ENCODE measurements at regions of chr20 and their contacts with region 1.

Region 1: GRCh38 chr20:36645998-36646397 is at the start of gene SLA2:
- DNase-seq: peak; percentile 65 to 85 (median 71)
- H3K4me3 ChIP-seq: peak within 1 kb of the TSS; percentile 75 to 83
- H3K4me3 Mint-ChIP-seq: peak within 1 kb of the TSS; percentile 92 to 99 (median 98)
- H3K27ac ChIP-seq: peak within 1 kb of the TSS; percentile 77
- H3K27ac Mint-ChIP-seq: peak within 1 kb of the TSS; percentile 97 to 99 (median 98)
- H3K4me1 ChIP-seq: peaks cover 47% of the 10 kb centered on the region
- H3K4me1 Mint-ChIP-seq: peaks cover 28 to 67% (median 49%) of the 10 kb centered on the region in 4 donors
- H3K27me3 ChIP-seq: no peaks in the 10 kb centered on the region
- H3K27me3 Mint-ChIP-seq: no peaks in the 10 kb centered on the region
- total RNA-seq, gene SLA2: 28.7 to 29.9 TPM

Region 2: GRCh38 chr20:36573103-36573794 is 72.7 kb before region 1 on chr20 and contains the start of gene TGIF2:
- CTCF ChIA-PET with region 1: no interaction called
- POLR2A ChIA-PET with region 1: interaction called, 10 read pairs
- intact Hi-C with region 1: no loop called
- DNase-seq: peak; percentile 87 to 92 (median 89)
- H3K4me3 ChIP-seq: peak within 1 kb of the TSS; percentile 47 to 73
- H3K4me3 Mint-ChIP-seq: peak within 1 kb of the TSS; percentile 89 to 96 (median 92)
- H3K27ac ChIP-seq: peak within 1 kb of the TSS; percentile 100
- H3K27ac Mint-ChIP-seq: peak within 1 kb of the TSS; percentile 95 to 99 (median 99)
- H3K4me1 ChIP-seq: peaks cover 35% of the 10 kb centered on the region
- H3K4me1 Mint-ChIP-seq: peaks cover 24 to 46% (median 30%) of the 10 kb centered on the region in 4 donors
- H3K27me3 ChIP-seq: no peaks in the 10 kb centered on the region
- H3K27me3 Mint-ChIP-seq: no peaks in the 10 kb centered on the region
- total RNA-seq, gene TGIF2: 31.7 to 35.0 TPM

Region 3: DNA sequence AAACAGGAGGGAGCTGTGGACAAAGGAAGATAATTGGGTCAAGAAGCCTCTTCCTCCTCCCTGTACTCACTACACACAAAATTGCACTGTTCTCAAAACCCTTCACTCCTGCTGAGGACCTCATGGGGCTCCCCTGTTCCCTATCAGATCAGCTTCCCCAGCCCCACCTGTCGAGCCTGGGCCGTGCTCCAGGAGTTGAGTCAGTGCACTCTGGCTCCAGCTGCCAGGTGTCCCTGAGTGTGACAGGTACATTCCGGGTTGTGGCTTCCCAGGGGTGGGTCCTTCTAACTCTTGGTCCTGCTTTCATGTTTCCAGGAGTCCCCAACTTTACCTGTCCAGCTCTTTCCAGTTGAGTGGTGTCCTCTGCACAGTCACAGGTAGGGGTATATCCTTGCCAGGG is 32.0 kb before region 1 on chr20:
- CTCF ChIA-PET with region 1: interaction called, 83 read pairs
- POLR2A ChIA-PET with region 1: interaction called, 131 read pairs
- intact Hi-C with region 1: loop called (anchors 1 kb)
- DNase-seq: no peak
- H3K4me3 ChIP-seq: no peak overlapping the region
- H3K4me3 Mint-ChIP-seq: no peak overlapping the region
- H3K27ac ChIP-seq: no peak overlapping the region
- H3K27ac Mint-ChIP-seq: peak overlapping the region in 6 of 7 donors; percentile 43 to 74 (median 58)
- H3K4me1 ChIP-seq: peaks cover 15% of the 10 kb centered on the region
- H3K4me1 Mint-ChIP-seq: peaks cover 8 to 15% (median 10%) of the 10 kb centered on the region in 4 donors
- H3K27me3 ChIP-seq: no peaks in the 10 kb centered on the region
- H3K27me3 Mint-ChIP-seq: no peaks in the 10 kb centered on the region

Region 4: GRCh38 chr20:36658300-36658699 is 12.3 kb after region 1 on chr20:
- CTCF ChIA-PET with region 1: interaction called, 15 read pairs
- POLR2A ChIA-PET with region 1: interaction called, 7 read pairs
- intact Hi-C with region 1: no loop called
- DNase-seq: peak in 4 of 5 donors; percentile 33 to 46 (median 42)
- H3K4me3 ChIP-seq: peak overlapping the region; percentile 0 to 42
- H3K4me3 Mint-ChIP-seq: peak overlapping the region; percentile 65 to 81 (median 75)
- H3K27ac ChIP-seq: no peak overlapping the region
- H3K27ac Mint-ChIP-seq: peak overlapping the region; percentile 25 to 81 (median 71)
- H3K4me1 ChIP-seq: peaks cover 19% of the 10 kb centered on the region
- H3K4me1 Mint-ChIP-seq: peaks cover 11 to 27% (median 20%) of the 10 kb centered on the region in 4 donors
- H3K27me3 ChIP-seq: no peaks in the 10 kb centered on the region
- H3K27me3 Mint-ChIP-seq: no peaks in the 10 kb centered on the region

Region 5: DNA sequence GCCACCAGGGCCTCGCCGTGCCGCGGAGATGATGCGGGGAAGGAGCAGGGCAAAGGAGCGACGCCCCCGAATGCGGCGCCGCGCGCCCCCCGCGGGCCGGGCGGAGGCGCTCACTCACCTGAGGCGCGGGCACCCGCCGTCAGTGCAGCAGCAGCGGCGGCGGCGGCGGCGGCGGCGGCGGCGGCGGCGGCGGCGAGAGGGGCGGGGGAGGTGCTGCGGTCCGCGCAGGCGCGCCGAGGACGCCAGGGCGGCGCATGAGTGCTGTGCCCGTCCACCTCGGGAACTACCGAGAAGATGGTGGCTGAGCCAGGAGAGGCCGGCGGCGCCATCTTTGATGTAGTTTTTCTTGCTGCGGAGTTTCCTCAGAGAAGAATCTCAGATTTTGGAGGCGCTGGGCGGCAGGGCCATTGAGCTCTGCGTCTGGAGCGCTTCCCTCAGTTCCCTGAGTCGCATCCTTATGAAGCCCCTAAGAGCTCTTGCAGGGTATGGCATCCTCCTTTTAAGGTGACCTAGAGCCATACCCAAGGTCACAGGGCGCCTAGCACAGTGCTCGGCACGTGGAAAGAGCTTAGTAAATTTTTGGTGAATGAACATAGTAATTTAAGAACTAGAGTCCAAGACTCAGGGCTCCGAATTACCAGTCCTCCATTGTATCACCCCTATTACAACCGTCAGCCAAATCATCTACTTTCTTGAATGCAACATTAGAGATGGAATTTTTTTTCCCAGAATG is 100.1 kb after region 1 on chr20 and contains the start of gene NDRG3:
- CTCF ChIA-PET with region 1: no interaction called
- POLR2A ChIA-PET with region 1: interaction called, 4 read pairs
- intact Hi-C with region 1: loop called (anchors 5 kb)
- DNase-seq: peak; percentile 90 to 94 (median 93)
- H3K4me3 ChIP-seq: peak within 1 kb of the TSS; percentile 79 to 86
- H3K4me3 Mint-ChIP-seq: peak within 1 kb of the TSS; percentile 88 to 95 (median 91)
- H3K27ac ChIP-seq: peak within 1 kb of the TSS; percentile 63
- H3K27ac Mint-ChIP-seq: peak within 1 kb of the TSS; percentile 90 to 97 (median 94)
- H3K4me1 ChIP-seq: peaks cover 21% of the 10 kb centered on the region
- H3K4me1 Mint-ChIP-seq: peaks cover 19 to 41% (median 21%) of the 10 kb centered on the region in 4 donors
- H3K27me3 ChIP-seq: no peaks in the 10 kb centered on the region
- H3K27me3 Mint-ChIP-seq: no peaks in the 10 kb centered on the region
- total RNA-seq, gene NDRG3: 36.1 to 36.2 TPM